ENCODE measurements at regions of chr1 and their contacts with region 1.

Region 1: GRCh38 chr1:229258031-229258756 is 12.7 kb upstream of the RAB4A start:
- DNase-seq: peak; percentile 69 to 85 (median 79)
- H3K4me3 ChIP-seq: peak overlapping the region in 4 of 7 experiments; percentile 5 to 56 (median 23)
- H3K27ac ChIP-seq: no peak overlapping the region
- H3K4me1 ChIP-seq: peaks cover 11 to 20% (median 19%) of the 10 kb centered on the region in 4 experiments
- H3K27me3 ChIP-seq: no peaks in the 10 kb centered on the region

Region 2: GRCh38 chr1:228664399-228664914 is 593.7 kb before region 1 on chr1:
- CTCF ChIA-PET with region 1: interaction called, 79 read pairs
- POLR2A ChIA-PET with region 1: no interaction called
- DNase-seq: peak; percentile 72 to 85 (median 74)
- H3K4me3 ChIP-seq: no peak overlapping the region
- H3K27ac ChIP-seq: no peak overlapping the region
- H3K4me1 ChIP-seq: peaks cover 0 to 9% (median 4%) of the 10 kb centered on the region in 4 experiments
- H3K27me3 ChIP-seq: peaks cover 0 to 7% (median 0%) of the 10 kb centered on the region in 5 experiments

Region 3: DNA sequence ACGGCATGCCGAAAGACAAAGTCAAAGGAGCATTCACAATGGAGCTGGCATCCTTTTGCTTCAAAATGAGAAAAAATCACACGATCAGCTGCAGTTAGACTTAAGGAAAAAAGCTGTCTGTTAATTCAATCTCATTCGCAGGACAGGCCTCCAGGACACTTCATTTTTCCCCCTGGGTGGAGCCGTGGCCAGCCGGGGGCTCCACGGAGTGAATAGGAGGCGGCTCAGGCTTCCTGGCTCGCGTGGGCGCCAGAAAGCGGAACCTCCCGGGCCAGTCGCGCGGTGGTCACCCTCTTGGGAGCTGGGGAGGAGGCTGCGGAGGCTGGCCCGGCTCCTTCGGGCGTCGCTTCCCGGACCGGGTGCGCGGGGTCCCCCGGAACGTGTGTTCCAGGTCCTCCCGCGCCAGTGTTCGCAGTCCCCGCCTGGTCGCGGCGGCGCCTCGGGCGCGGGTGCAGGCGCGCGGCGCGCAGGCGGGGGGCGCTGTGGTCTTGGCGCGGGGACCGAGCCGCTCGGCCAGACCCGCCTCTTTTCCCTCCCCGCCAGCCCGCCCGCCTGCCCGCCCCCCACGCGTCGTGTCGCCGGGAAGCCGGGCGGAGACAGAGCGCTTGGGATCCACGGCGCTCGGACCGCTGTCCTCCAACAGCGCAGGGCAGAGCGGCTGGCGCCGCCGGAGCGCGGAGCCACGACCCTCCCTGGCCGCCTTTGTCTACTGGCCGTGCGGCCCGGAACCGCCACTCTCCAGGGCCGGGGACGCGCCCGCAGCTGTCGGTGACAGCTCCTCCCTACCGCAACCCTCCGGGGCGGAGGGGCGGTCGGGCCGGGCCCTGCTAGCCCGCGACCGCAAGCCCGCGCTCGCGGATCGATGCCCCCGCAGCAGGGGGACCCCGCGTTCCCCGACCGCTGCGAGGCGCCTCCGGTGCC is 523.1 kb before region 1 on chr1 and contains the start of gene RHOU:
- CTCF ChIA-PET with region 1: interaction called, 12 read pairs
- POLR2A ChIA-PET with region 1: no interaction called
- DNase-seq: peak; percentile 52 to 79 (median 66)
- H3K4me3 ChIP-seq: peak within 1 kb of the TSS; percentile 40 to 79 (median 70)
- H3K27ac ChIP-seq: no peak within 1 kb of the TSS
- H3K4me1 ChIP-seq: peaks cover 0 to 17% (median 16%) of the 10 kb centered on the region in 4 experiments
- H3K27me3 ChIP-seq: peaks cover 0 to 17% (median 9%) of the 10 kb centered on the region in 5 experiments

Region 4: GRCh38 chr1:228837817-228838716 is 420.1 kb before region 1 on chr1:
- CTCF ChIA-PET with region 1: no interaction called
- POLR2A ChIA-PET with region 1: no interaction called
- DNase-seq: no peak
- H3K4me3 ChIP-seq: no peak overlapping the region
- H3K27ac ChIP-seq: no peak overlapping the region
- H3K4me1 ChIP-seq: peaks cover 0 to 16% (median 7%) of the 10 kb centered on the region in 4 experiments
- H3K27me3 ChIP-seq: peaks cover 0 to 1% (median 0%) of the 10 kb centered on the region in 5 experiments

Region 5: DNA sequence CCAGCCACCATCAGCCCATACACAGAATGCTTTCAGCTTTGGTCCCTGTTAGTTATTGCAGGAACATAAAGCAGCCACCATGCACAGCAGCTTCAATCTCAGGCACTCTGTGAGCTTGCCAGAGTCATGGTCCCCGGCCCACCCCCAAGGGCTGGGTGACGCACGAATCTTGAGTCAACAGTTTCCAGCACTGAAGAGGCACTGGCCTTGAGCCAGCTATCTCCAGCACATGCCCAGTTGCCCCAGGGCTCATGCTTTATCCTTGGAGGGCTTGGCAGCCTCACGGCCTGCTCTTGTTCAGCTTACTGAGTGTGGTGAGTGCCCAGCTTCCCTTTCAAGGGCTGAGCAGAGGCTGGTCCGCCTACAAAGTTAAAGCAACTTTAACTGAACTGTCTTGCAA is 188.0 kb before region 1 on chr1:
- CTCF ChIA-PET with region 1: no interaction called
- POLR2A ChIA-PET with region 1: no interaction called
- DNase-seq: peak; percentile 31 to 70 (median 65)
- H3K4me3 ChIP-seq: no peak overlapping the region
- H3K27ac ChIP-seq: no peak overlapping the region
- H3K4me1 ChIP-seq: peaks cover 0 to 41% (median 17%) of the 10 kb centered on the region in 4 experiments
- H3K27me3 ChIP-seq: no peaks in the 10 kb centered on the region

Region 6: GRCh38 chr1:229203030-229203751 is 55.0 kb before region 1 on chr1:
- CTCF ChIA-PET with region 1: no interaction called
- POLR2A ChIA-PET with region 1: no interaction called
- DNase-seq: peak; percentile 17 to 42 (median 25)
- H3K4me3 ChIP-seq: no peak overlapping the region
- H3K27ac ChIP-seq: no peak overlapping the region
- H3K4me1 ChIP-seq: peaks cover 2 to 10% (median 8%) of the 10 kb centered on the region in 4 experiments
- H3K27me3 ChIP-seq: no peaks in the 10 kb centered on the region

Region 7: DNA sequence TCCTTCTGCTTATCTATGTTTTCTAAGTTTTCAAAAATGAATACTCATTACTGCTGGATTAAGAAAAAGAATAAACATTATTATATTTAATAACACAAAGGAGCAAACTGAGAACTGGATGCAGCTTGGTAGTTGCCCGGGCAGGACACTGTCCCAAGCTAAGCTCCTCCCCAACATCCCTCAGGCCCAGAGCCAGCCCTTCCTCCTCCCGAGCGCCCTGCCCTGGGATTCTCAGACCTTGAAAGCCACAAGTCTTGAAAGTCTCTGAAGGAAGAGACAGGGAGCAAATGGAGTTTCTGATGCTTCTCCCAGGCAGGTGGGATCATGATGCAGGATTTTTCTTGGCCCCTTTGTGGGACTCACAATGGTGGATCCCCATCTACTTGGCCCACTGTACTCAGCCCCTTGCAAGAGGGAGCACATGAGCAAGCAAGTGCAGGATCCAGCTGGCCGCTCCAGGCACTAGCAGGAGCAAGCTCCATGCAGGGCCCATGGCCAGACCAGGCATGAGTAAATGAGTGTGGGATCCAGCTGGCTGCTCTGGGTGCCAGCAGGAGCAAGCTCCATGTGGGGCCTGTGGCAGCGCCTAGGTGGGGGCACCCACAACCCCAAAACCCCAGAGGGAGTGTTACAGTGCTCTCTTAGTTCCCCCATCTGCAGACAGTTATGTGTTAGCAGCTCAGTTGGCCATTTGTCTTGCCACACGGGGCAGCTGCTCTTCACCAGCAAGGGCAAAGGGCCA is 19.3 kb before region 1 on chr1:
- CTCF ChIA-PET with region 1: interaction called, 14 read pairs
- POLR2A ChIA-PET with region 1: interaction called, 3 read pairs
- DNase-seq: no peak
- H3K4me3 ChIP-seq: no peak overlapping the region
- H3K27ac ChIP-seq: no peak overlapping the region
- H3K4me1 ChIP-seq: no peaks in the 10 kb centered on the region
- H3K27me3 ChIP-seq: peaks cover 0 to 5% (median 0%) of the 10 kb centered on the region in 5 experiments

Region 8: GRCh38 chr1:229347528-229347927 is 89.3 kb after region 1 on chr1:
- CTCF ChIA-PET with region 1: interaction called, 14 read pairs
- POLR2A ChIA-PET with region 1: no interaction called
- DNase-seq: no peak
- H3K4me3 ChIP-seq: no peak overlapping the region
- H3K27ac ChIP-seq: no peak overlapping the region
- H3K4me1 ChIP-seq: peaks cover 0 to 12% (median 10%) of the 10 kb centered on the region in 4 experiments
- H3K27me3 ChIP-seq: peaks cover 0 to 9% (median 5%) of the 10 kb centered on the region in 5 experiments

Region 9: DNA sequence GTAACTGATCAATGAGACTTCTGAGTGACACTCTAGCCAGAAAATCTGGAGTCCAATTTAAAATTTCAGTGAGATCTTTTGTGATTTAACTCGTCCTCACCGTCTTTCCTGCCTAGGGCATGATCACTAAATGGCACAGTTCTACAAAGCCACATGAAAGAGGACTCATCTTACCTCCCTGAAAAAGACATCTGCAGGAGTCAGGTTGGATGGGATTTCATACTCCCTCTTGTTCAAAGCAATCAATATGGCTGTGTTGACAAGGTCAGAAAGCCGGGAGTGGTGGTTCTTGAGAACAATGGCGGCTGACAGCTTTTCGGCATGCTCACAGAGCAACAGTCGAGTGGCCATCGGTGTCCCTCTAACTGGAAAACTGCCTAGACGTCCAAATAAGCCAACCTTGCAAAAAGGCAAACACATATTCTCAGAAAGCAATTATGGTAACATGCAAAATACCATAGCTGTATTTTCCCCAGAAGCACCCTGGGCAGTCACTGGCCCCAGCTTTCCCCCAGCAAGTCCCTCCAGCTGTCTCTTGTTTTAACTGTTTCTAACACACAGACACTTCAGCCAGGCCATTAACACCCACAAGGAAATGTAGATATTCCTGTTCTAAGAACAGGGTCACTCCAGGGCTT is 212.3 kb after region 1 on chr1:
- CTCF ChIA-PET with region 1: interaction called, 19 read pairs
- POLR2A ChIA-PET with region 1: no interaction called
- DNase-seq: no peak
- H3K4me3 ChIP-seq: no peak overlapping the region
- H3K27ac ChIP-seq: no peak overlapping the region
- H3K4me1 ChIP-seq: no peaks in the 10 kb centered on the region
- H3K27me3 ChIP-seq: no peaks in the 10 kb centered on the region